K562 (cell line): ENCODE measurements at regions of chr17 and their contacts with region 1.

Region 1: GRCh38 chr17:44990994-44991393 is 22.9 kb upstream of the C1QL1 start:
- DNase-seq: no peak
- ATAC-seq: no peak
- H3K4me3 ChIP-seq: no peak overlapping the region
- H3K27ac ChIP-seq: no peak overlapping the region
- H3K4me1 ChIP-seq: peaks cover 0 to 5% of the 10 kb centered on the region in 2 experiments; a peak in 2 of 5 replicates
- H3K27me3 ChIP-seq: peaks cover 40 to 76% of the 10 kb centered on the region in 2 experiments; a peak in 4 of 5 replicates
- CTCF ChIP-seq: no peak
- EP300 ChIP-seq: no peak
- POLR2A ChIP-seq: no peak
- RAD21 ChIP-seq: no peak

Region 2: DNA sequence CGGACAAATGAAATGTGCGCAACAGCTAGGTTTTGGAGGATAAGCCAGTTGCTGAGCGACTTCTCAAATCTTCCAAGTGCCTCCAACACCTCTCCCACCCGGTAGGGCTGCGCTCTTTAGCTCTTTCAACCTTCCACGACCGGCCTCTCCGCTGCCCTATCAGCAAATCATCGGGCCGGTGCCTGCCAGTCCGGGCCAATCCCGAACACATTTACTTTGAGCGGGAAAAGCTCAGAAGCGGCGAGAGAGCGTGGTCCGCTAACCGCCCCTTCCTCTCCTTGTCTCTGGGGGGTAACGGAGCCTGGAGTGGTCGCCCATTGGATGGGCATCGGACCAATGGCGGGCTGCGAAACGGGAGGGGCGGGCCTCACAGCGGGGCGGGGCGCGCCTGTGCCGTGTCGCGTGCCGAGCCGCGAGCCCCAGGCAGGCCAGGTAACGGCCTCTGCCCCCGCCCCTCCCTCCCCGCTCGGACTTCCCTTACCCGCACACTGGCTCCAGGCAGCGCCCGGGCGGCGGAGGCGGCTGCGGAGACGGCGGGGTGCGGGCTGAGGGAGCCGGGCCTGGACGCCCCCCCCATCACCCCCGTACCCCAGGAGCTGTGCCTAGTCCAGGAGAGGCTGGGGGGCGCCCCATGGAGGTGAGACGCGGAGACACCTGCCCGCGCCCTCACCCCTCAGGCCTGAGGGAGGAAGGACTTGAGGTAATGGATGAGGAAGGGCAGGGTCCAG is 334.8 kb before region 1 on chr17 and contains the start of gene MEIOC:
- CTCF ChIA-PET with region 1: no interaction called
- POLR2A ChIA-PET with region 1: no interaction called
- in situ Hi-C with region 1: no loop called
- intact Hi-C with region 1: no loop called
- DNase-seq: no peak
- ATAC-seq: no peak
- H3K4me3 ChIP-seq: no peak within 1 kb of the TSS
- H3K27ac ChIP-seq: no peak within 1 kb of the TSS
- H3K4me1 ChIP-seq: no peaks in the 10 kb centered on the region; a peak in 1 of 5 replicates
- H3K27me3 ChIP-seq: 0 out of 5 replicates have a peak, but pooled peaks cover 0 to 2% of the 10 kb centered on the region in 2 experiments
- CTCF ChIP-seq: no peak
- EP300 ChIP-seq: no peak
- POLR2A ChIP-seq: no peak
- RAD21 ChIP-seq: no peak
- polyA plus RNA-seq, gene MEIOC: 0.07 to 0.23 TPM

Region 3: DNA sequence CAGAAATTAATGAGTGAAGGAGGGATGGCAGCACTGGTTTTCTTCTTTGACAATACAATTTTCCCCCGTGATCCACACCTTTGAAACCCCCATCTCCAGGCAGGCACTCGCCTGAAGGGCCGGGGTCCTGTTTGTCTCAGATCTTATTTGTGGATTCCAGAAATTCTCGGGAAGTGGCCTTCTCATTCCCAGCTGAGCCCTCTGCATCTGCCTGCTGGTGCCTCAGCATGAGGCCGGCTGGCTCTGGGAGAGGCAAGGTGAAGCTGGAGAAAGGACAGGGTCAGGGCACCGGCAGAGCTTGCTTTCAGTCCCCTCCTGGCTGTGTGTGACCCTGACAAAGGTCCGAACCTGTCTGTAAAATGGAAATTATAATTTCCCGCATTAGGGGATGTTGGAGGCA is 12.9 kb after region 1 on chr17:
- CTCF ChIA-PET with region 1: no interaction called
- POLR2A ChIA-PET with region 1: interaction called, 21 read pairs
- in situ Hi-C with region 1: no loop called
- intact Hi-C with region 1: no loop called
- DNase-seq: no peak
- ATAC-seq: no peak
- H3K4me3 ChIP-seq: no peak overlapping the region
- H3K27ac ChIP-seq: no peak overlapping the region
- H3K4me1 ChIP-seq: no peaks in the 10 kb centered on the region; a peak in 1 of 5 replicates
- H3K27me3 ChIP-seq: peaks cover 9 to 43% of the 10 kb centered on the region in 2 experiments; a peak in 4 of 5 replicates
- CTCF ChIP-seq: no peak
- EP300 ChIP-seq: no peak
- POLR2A ChIP-seq: no peak
- RAD21 ChIP-seq: no peak